BJ (cell line): ENCODE measurements at regions of chr10 and their contacts with region 1.

Region 1: GRCh38 chr10:79195091-79195923 is 126.5 kb downstream of the ZMIZ1 start:
- DNase-seq: no peak
- H3K4me3 ChIP-seq: no peak overlapping the region
- H3K27me3 ChIP-seq: no peaks in the 10 kb centered on the region
- CTCF ChIP-seq: peak; percentile 90

Region 2: DNA sequence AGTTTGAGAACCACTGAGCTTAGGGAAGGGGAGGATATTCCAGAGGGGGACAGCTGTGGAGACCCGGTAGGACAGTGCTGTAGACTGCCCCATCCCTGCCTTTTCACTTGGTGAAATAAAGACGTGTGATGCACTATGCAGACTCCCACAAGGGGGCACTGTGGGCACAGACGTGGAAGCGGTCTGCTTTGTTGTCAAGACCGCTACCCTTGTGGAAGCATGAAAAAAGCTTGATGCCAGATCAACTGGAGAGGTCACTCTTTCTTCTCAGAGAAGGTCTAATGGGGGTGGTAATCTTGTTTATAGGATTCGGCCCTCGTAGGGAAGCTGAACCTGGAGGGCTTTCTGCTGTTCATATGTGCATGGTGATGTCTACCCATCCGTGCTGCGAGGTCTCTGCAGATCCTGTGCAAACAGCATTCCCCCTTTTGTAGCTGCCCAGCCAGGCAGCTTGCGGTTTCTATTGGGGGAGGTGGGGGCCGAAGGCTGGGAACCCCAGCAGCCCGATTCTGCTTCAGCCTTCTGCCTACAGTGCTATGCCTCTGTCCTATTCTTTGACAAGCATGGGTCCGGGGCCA is 1147.9 kb before region 1 on chr10:
- CTCF ChIA-PET with region 1: interaction called, 32 read pairs
- POLR2A ChIA-PET with region 1: no interaction called
- DNase-seq: no peak
- H3K4me3 ChIP-seq: no peak overlapping the region
- H3K27me3 ChIP-seq: no peaks in the 10 kb centered on the region
- CTCF ChIP-seq: peak; percentile 91

Region 3: DNA sequence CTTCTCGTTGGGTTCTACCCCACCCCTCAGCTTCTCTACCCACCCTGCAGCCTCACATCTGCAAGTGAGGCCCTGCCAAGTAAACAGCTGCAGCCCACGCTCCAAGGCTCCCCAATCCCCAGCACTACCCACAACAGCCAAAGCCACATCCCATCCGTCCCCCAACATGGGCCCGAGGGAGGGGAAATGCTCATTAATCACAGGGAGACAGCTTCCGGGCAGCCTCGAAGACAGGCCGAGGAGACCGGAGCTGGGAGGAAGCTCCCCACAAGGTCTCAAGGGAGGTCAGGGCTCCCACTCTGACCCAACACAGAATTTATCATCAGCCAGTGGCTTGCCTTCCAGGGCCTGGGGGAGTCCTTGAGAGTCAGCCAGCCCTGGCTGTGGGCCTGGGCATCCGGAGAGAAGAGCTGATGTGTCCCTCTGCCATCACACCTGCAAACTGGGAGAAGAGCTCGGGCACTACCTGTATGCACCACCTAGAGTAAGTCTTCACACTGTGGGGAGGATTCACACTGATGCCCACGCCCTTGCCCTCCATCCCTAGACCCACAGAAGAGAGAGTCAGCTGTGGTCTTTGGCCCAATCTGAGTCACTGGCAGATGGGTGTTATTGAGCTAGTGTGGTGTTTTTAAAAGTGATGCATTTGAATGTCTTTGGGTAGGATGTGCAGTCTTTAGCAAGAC is 242.1 kb before region 1 on chr10:
- CTCF ChIA-PET with region 1: interaction called, 13 read pairs
- POLR2A ChIA-PET with region 1: no interaction called
- DNase-seq: no peak
- H3K4me3 ChIP-seq: no peak overlapping the region
- H3K27me3 ChIP-seq: no peaks in the 10 kb centered on the region
- CTCF ChIP-seq: no peak

Region 4: GRCh38 chr10:79079490-79080355 is 115.6 kb before region 1 on chr10:
- CTCF ChIA-PET with region 1: interaction called, 31 read pairs
- POLR2A ChIA-PET with region 1: interaction called, 11 read pairs
- DNase-seq: no peak
- H3K4me3 ChIP-seq: no peak overlapping the region
- H3K27me3 ChIP-seq: no peaks in the 10 kb centered on the region
- CTCF ChIP-seq: no peak

Region 5: DNA sequence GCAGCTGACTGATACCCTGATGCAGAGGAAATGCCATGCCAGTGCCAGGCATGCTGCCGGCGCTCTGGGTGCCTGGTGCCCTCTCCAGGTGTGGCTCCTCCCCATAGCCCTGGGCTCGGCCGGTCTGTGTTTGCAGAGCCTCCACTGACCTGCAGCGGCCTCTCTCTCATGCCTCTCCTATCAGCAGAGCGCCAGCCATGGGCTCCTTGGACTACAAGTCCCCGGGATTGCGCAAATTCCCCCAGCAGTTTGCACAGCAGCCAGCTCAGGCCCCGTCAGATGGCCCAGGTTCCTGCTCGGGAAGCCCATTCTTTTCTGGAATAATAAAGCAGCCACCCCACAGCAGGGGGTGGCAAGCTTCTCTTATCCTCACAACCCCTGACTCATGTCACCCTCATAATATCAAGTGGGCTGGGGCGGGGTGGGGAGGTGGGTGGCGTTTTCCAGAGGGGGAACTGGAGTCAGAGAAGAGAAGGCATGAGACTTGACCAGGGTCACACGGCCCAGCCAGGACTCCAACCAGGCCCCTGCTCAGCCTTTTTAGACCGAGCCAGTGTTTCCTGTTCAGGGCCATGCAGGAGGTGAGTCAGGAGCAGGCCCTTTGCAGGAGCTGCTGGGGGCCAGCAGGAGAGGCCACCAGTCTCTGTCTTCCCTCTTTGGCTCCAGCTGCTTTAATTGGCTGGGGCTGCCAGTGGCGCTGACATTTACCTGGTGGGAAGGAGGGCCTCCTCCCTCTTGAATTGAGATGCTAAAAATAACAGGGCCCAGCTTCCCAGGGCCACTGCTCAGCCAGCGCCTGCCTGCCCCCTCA is 68.0 kb before region 1 on chr10:
- CTCF ChIA-PET with region 1: interaction called, 29 read pairs
- POLR2A ChIA-PET with region 1: no interaction called
- DNase-seq: no peak
- H3K4me3 ChIP-seq: no peak overlapping the region
- H3K27me3 ChIP-seq: no peaks in the 10 kb centered on the region
- CTCF ChIP-seq: 0 out of 2 replicates have a peak, but pooled peaks have one; percentile 4

Region 6: DNA sequence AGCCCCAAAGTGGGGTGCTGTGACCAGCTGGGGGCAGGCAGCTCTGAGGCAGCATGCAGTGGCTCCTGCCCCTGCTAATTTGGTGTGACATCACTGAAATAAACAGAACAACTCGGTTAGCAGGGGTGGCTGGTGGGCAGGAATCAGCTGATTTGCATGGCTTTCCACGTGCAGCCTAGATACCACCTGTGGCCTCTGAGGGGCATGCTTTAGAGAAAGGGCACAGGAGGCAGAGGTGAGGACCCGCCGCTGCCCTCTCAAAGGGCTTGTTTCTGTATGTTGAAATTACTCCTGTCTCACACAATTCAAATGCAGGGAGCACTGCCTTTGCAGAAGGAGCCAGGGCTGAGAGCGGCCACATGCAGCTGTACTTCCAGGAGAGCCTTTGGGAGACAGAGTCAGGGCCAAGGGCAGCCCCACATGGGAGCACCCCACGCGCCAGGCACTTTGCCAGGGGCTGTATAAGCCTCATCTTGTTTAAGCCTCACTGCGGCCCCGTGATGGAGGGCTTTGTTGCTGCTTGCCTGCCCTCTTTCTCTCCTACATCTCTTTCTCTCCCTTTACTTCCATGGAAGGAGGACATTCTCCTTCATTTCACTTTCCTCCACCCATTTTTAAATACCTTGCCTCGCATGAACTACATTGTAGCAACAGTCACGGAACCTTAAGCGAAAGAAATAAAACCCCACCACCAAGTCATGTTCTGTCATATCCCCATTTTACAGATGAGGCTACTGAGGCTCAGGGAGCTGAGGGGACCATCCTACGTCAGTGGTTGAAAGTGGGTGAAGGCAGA is 11.2 kb after region 1 on chr10:
- CTCF ChIA-PET with region 1: interaction called, 36 read pairs
- POLR2A ChIA-PET with region 1: no interaction called
- DNase-seq: no peak
- H3K4me3 ChIP-seq: no peak overlapping the region
- H3K27me3 ChIP-seq: no peaks in the 10 kb centered on the region
- CTCF ChIP-seq: no peak